ENCODE measurements at regions of chr3 and their contacts with region 1.

Region 1: DNA sequence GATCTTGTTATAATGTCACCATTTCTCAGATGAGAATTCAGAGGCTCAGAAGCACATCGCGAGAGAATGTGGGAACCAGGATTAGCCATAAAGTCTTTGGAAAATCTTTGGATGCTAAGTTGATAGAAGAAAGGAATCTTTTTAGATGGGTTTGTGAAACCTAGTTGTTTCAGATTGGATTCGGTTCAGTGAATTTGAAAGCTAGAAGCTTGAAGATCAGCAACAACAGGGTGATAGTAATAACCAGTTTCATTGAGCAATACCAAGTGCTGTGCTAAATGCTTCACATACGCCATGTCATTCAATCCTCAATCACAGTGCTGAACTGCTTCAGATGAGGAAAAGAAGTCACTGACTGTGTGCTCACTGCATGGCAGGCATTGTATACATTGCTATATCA is 47.4 kb upstream of the MITF start:
- DNase-seq: no peak
- H3K4me3 ChIP-seq: no peak overlapping the region
- H3K27ac ChIP-seq: no peak overlapping the region
- H3K27me3 ChIP-seq: peaks cover 0 to under 1% (median 0%) of the 10 kb centered on the region in 45 donors
- CTCF ChIP-seq: no peak

Region 2: DNA sequence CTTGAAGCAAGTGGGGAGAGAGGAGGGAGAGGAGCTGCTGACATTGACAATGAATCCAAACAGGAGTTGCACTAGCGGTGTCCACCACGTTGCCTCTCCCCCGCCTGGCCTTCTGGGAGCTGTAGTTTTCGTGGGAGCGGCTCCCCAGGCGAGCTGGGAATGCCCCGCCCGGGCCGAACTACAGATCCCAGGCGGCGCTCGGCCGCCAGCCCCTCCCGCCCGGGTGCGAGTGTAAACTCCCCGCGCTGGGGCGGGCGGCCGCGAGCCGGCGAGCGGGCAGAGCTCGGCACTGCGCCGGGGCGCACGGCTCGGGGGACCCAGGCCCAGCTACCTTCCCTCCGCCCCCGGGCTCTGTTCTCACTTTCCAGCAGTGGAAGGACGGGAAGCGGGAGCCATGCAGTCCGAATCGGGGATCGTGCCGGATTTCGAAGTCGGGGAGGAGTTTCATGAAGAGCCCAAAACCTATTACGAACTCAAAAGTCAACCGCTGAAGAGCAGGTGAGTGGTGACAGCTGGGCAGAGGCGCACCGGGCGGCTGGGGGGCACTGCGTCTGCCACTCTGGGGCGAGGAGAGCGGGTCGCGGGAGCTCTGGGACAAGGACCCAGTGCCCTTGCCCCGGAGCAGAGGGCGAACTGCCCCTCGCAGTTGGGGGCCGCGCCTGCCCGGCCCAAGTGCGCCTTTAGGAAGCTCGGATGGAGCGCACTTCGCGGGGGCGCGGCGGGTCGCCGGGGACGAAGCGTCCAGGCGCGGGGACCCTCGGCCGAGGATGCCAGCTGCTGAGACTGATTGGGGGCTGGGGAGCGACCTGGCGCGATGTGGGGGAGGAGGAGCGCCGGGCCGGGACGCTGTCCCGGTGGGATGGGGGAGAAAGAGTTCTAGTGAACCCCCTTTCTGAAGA is 47.6 kb after region 1 on chr3 and contains the start of gene MITF:
- intact Hi-C with region 1: loop called in 1 of 2 experiments (anchors 5 kb)
- DNase-seq: peak; percentile 79 to 96 (median 94)
- H3K4me3 ChIP-seq: peak within 1 kb of the TSS; percentile 60 to 99 (median 92)
- H3K27ac ChIP-seq: peak within 1 kb of the TSS in 53 of 59 donors; percentile 17 to 89 (median 75)
- H3K27me3 ChIP-seq: peaks cover 0 to 12% (median 0%) of the 10 kb centered on the region in 45 donors
- CTCF ChIP-seq: peak in 26 of 56 donors; percentile 11 to 51 (median 28)
- total RNA-seq, gene MITF: 4.7 to 23.9 (median 11.8) TPM

Region 3: DNA sequence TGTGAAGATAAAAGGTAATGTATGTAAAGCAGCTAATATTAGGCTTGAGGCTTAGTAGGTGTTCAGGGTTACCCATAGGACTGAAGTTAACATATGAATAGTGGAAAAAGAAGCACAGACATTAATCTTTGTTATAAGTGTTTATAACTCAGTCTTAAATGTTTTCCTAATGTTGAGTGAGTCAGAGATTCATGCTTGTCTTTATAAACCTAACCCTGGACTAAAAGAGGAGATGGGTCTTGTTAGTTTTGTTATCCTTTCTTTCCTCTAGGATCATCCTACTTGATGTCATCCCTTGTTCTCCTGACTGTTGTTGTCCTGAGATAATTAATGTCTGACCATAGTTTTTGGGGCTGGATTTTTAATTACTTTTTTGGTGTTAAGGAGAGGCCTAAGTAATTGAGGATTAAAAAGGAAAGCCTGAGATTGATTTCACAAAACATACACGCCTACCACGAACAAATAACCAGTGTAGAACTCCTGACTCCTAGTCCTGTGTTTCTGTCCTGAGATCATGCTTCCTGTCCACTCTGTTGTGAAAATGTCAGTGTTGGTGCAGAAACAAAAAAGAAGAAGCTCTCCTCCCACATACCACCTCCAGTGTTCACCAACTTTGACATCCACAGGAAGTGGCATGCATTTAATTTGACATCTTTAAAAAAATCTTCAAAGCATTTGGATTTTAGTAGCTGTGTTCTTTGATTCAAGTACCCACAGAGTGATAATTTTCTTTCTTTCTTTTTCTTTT is 55.8 kb after region 1 on chr3:
- intact Hi-C with region 1: loop called in 1 of 2 experiments (anchors 5 kb)
- DNase-seq: no peak
- H3K4me3 ChIP-seq: no peak overlapping the region
- H3K27ac ChIP-seq: peak overlapping the region in 3 of 59 donors; percentile 5 to 18 (median 15)
- H3K27me3 ChIP-seq: no peaks in the 10 kb centered on the region
- CTCF ChIP-seq: no peak

Region 4: DNA sequence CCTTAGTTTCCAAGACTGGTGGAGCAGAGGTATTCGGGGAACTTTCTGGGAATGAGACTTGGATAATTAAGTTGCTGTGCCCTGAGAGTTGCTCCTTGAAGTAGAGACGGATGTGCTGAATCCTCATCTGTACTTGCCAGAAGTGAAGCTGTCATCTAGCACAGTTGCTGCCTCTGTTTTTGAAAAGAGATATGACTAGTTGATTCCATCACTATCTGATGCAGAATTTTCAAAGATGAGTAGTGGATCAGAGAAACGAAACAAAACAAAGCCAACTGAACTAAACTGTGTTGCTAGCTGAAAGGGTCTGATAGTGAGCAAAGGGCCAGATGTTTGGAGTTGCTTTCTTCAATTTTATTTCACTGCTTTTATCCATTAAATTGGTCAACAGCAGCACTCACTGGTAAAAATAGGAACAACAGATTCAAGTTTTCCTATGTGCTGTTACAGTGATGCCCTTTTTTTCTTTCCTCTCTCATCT is 100.1 kb after region 1 on chr3:
- intact Hi-C with region 1: loop called (anchors 2 kb)
- DNase-seq: no peak
- H3K4me3 ChIP-seq: peak overlapping the region in 14 of 59 donors; percentile 3 to 40 (median 18)
- H3K27ac ChIP-seq: peak overlapping the region in 53 of 59 donors; percentile 8 to 86 (median 60)
- H3K27me3 ChIP-seq: no peaks in the 10 kb centered on the region
- CTCF ChIP-seq: peak in 55 of 56 donors; percentile 43 to 84 (median 65)

Region 5: DNA sequence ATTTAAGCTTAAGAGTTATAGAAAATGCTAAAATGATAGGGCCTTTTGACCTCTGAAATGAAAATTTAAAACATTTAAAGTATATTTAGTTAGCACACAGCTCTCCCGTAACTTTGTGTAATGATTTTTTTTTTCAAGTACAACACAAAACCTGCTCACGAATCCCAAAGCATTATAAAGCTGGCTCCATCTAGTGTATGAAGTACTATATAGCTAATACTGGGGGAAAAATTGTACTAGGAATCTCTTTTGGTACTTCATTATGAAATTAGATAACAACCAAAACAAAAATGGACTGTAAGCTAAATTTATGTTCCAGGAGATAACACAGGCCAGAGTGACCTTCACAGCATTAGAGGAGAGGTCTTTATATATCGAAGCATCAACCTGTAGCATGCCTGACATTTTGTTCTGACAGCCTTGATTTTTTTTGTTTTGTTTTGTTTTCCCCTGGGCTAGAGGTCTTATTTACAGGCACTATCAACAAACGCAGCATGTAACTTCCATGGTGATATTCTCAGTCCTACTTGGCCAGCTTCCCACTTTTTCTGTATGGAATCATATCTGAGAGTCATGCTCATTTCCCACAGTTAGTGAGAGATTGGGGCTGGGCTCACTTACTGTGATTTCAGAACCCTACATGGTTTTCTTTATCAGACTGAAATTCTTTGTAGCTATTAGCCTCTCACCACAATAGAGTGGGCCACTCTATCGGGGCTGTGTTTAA is 163.7 kb after region 1 on chr3:
- intact Hi-C with region 1: loop called in 1 of 2 experiments (anchors 2 kb)
- DNase-seq: no peak
- H3K4me3 ChIP-seq: peak overlapping the region in 13 of 59 donors; percentile 8 to 47 (median 19)
- H3K27ac ChIP-seq: peak overlapping the region in 45 of 59 donors; percentile 1 to 79 (median 50)
- H3K27me3 ChIP-seq: no peaks in the 10 kb centered on the region
- CTCF ChIP-seq: peak; percentile 31 to 81 (median 60)

Region 6: GRCh38 chr3:69948246-69948862 is 256.5 kb after region 1 on chr3:
- intact Hi-C with region 1: loop called (anchors 5 kb)
- DNase-seq: no peak
- H3K4me3 ChIP-seq: no peak overlapping the region
- H3K27ac ChIP-seq: peak overlapping the region in 55 of 59 donors; percentile 10 to 99 (median 91)
- H3K27me3 ChIP-seq: no peaks in the 10 kb centered on the region
- CTCF ChIP-seq: peak; percentile 61 to 91 (median 80)